Activated CD4-positive, alpha-beta memory T cell treated with anti-CD3 and anti-CD28 coated beads, Interleukin-2, amount 10 ng/mL, durations not matched to agents 7 days and 5 days (primary cell): ENCODE measurements at regions of chr10 and their contacts with region 1.

Region 1: GRCh38 chr10:61961278-61961677 is 59.8 kb downstream of the ARID5B start:
- DNase-seq: peak; percentile 59
- H3K4me3 Mint-ChIP-seq: peak overlapping the region; percentile 39
- H3K27ac Mint-ChIP-seq: peak overlapping the region; percentile 90
- H3K4me1 Mint-ChIP-seq: peaks cover 81% of the 10 kb centered on the region
- H3K27me3 Mint-ChIP-seq: no peaks in the 10 kb centered on the region

Region 2: GRCh38 chr10:61937631-61938351 is 23.5 kb before region 1 on chr10:
- CTCF ChIA-PET with region 1: interaction called, 3 read pairs
- POLR2A ChIA-PET with region 1: interaction called, 34 read pairs
- DNase-seq: no peak
- H3K4me3 Mint-ChIP-seq: peak overlapping the region; percentile 37
- H3K27ac Mint-ChIP-seq: peak overlapping the region; percentile 64
- H3K4me1 Mint-ChIP-seq: peaks cover 86% of the 10 kb centered on the region
- H3K27me3 Mint-ChIP-seq: no peaks in the 10 kb centered on the region

Region 3: DNA sequence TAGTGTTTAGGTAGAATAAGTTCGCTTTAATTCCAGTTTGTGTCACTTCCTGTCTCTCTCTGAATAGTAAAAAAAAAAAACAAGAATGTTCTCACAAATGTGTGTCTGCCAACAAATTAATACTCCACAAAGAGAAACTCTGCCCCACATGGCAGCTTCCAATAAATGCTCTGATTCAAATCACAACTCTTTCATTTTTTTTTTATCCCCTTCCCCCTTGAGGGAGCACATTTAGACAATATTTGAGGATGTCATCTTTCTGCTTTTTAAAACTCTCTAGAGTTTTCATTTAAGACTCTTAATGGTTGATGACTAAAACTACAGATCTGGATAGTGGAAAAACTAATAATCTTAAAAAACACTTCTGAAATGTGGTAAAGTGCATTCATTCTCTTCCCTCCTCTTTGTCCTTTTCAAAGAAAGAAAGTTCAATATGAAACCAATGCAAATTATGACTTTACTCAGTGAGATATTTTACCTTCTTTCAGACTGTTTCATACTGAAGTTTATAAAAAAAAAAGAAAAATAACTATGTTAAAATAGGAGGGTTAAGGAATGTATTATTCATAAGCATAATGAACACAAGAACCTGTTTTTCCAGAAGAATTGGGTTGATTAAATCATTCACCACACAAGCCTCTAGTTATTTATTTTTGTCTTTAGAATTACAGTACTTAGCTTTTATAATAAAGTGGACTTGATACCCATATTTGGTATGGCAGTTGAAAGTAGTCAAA is 17.4 kb before region 1 on chr10:
- CTCF ChIA-PET with region 1: interaction called, 4 read pairs
- POLR2A ChIA-PET with region 1: interaction called, 34 read pairs
- DNase-seq: no peak
- H3K4me3 Mint-ChIP-seq: peak overlapping the region; percentile 68
- H3K27ac Mint-ChIP-seq: peak overlapping the region; percentile 87
- H3K4me1 Mint-ChIP-seq: peaks cover 56% of the 10 kb centered on the region
- H3K27me3 Mint-ChIP-seq: no peaks in the 10 kb centered on the region

Region 4: GRCh38 chr10:61950449-61951143 is 10.7 kb before region 1 on chr10:
- CTCF ChIA-PET with region 1: interaction called, 5 read pairs
- POLR2A ChIA-PET with region 1: interaction called, 14 read pairs
- DNase-seq: no peak
- H3K4me3 Mint-ChIP-seq: no peak overlapping the region
- H3K27ac Mint-ChIP-seq: no peak overlapping the region
- H3K4me1 Mint-ChIP-seq: peaks cover 24% of the 10 kb centered on the region
- H3K27me3 Mint-ChIP-seq: no peaks in the 10 kb centered on the region